ENCODE measurements at regions of chr4 and their contacts with region 1.

Region 1: GRCh38 chr4:8182858-8183725 is 16.0 kb upstream of the SH3TC1 start:
- DNase-seq: peak; percentile 97 to 98
- H3K4me3 ChIP-seq: no peak overlapping the region
- H3K27ac ChIP-seq: peak overlapping the region; percentile 75
- H3K4me1 ChIP-seq: peaks cover 40% of the 10 kb centered on the region
- H3K27me3 ChIP-seq: no peaks in the 10 kb centered on the region
- CTCF ChIP-seq: no peak

Region 2: GRCh38 chr4:8090312-8090711 is 92.8 kb before region 1 on chr4:
- CTCF ChIA-PET with region 1: no interaction called
- POLR2A ChIA-PET with region 1: no interaction called
- intact Hi-C with region 1: no loop called
- DNase-seq: peak in 1 of 2 experiments; percentile 19
- H3K4me3 ChIP-seq: no peak overlapping the region
- H3K27ac ChIP-seq: no peak overlapping the region
- H3K4me1 ChIP-seq: no peaks in the 10 kb centered on the region
- H3K27me3 ChIP-seq: no peaks in the 10 kb centered on the region
- CTCF ChIP-seq: no peak

Region 3: DNA sequence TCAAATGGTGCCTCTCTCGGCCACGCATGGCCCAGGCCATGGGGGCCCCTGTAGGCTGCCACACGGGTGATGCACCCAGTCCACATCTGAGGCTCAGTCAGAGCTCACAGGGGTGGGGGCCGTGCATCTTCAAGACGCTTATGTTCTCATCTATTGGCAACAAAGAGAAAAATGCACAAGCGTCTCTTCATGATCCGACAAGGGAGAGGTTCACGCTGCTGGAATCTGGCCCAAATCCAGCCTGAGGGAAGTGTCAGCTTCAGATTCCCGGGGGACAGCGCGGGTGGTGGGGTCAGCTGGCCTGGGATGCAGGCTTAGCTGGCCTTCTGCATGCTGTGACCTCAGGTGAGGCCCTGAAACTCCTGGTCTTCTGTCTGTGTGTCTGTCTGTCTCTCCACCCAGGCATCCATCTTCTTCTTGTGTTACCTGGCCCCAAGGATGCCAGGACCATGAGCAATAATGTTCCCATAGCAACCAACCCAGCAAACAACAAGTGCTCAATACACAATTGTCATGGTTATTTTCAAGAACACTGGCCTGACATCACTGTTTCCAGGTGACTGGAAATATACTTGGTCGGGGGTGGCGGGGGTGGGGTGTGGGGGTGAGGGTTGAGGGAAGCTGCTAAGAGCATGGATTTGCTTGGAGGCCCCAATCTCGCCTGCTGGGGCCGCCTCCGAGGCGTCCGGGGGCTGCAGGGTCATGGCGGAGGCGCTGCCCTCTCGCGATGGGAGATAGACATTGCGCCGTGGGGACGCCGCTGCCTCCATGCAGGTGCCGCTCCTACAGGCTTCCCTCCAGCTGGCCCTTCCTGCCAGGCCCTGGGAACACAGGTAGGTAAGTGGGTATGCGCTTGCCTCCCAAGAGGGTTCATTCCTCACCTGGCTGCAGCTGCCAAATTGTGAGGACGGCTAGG is 72.8 kb before region 1 on chr4:
- CTCF ChIA-PET with region 1: no interaction called
- POLR2A ChIA-PET with region 1: no interaction called
- intact Hi-C with region 1: no loop called
- DNase-seq: peak; percentile 25 to 69
- H3K4me3 ChIP-seq: no peak overlapping the region
- H3K27ac ChIP-seq: no peak overlapping the region
- H3K4me1 ChIP-seq: no peaks in the 10 kb centered on the region
- H3K27me3 ChIP-seq: peaks cover 7% of the 10 kb centered on the region; the same call in 1 of the 2 replicates
- CTCF ChIP-seq: no peak

Region 4: DNA sequence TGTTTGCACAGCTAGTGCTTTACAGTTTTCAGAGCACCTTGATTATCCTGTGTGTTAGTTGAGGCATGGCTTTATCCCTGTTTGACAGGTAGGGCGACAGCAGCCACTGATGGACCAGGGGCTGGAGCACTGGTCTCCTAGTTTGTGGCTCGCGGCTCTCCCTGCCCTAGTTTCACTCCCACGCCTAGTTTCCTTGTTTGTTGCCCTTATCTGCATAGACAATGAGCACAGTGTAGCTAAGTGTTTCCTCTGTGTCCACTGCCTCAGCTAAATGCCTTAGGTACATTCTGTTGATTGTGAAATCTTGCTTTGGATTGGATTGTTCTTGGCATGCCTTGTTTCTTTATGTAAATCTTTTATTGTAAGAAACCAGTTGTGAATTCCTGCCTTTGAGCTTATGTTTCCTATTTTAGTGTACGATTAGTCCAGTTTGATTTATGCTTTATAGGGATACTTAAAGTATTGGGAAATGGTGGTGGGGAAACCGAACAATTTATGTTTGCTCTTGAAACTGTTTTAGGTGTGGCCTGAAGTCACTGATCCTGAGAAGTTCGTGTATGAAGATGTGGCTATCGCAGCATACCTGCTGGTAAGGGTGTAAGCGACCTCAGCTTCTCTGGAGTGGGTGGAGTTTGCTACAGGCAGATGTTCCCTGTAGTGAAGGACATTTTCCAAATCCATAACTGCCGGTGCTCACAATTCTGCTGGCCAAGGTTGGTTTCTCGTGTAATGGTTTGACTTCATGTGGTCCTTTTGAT is 268.5 kb after region 1 on chr4:
- CTCF ChIA-PET with region 1: no interaction called
- POLR2A ChIA-PET with region 1: interaction called, 10 read pairs
- intact Hi-C with region 1: no loop called
- DNase-seq: peak in 1 of 2 experiments; percentile 80
- H3K4me3 ChIP-seq: no peak overlapping the region
- H3K27ac ChIP-seq: peak overlapping the region; percentile 43; the same call in 1 of the 2 replicates
- H3K4me1 ChIP-seq: no peaks in the 10 kb centered on the region
- H3K27me3 ChIP-seq: no peaks in the 10 kb centered on the region
- CTCF ChIP-seq: no peak

Measured in PC-9 (cell line).